Heart left ventricle (tissue), 16 donors: ENCODE measurements at regions of chr14 and their contacts with region 1.

Region 1: DNA sequence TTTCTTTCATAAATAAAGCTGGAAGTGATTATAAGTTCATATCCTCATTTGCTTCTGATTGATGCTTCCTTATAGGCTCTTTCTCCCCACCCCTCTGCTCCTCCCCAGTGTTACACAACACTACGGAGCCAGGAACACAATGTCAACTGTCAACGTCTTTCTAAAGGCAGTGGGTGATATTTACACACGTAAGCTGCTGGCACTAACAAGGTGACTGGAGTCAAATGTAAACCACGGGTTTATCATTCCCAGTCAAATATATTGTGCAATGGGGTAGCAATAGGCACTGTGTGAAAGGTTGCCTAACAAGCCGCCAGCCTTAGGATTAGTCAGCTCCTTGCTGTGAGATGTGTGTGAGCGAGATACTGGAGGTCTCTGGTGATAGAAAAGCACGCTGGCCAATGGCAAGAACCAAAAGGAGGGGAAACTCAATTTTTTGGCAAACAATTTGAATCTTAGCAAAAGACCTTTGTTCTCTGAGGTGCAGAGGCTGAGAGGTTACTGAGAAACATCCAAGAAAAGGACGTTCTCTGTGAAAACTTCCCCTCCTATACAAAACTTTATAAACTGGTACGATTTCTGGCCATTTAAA is 22.1 kb upstream of the HECTD1 start:
- DNase-seq: peak in 4 of 5 donors; percentile 19 to 87 (median 52)
- ATAC-seq: peak; percentile 96 to 100 (median 98)
- H3K4me3 ChIP-seq: peak overlapping the region in 8 of 12 donors; percentile 20 to 46 (median 31)
- H3K27ac ChIP-seq: peak overlapping the region in 11 of 12 donors; percentile 10 to 79 (median 57)
- H3K4me1 ChIP-seq: peaks cover 0 to 17% (median 3%) of the 10 kb centered on the region in 12 donors
- H3K27me3 ChIP-seq: no peaks in the 10 kb centered on the region
- CTCF ChIP-seq: no peak
- POLR2A ChIP-seq: no peak

Region 2: GRCh38 chr14:31059152-31059924 is 170.4 kb before region 1 on chr14:
- intact Hi-C with region 1: no loop called
- DNase-seq: peak in 3 of 5 donors; percentile 39 to 69 (median 65)
- ATAC-seq: peak in 3 of 4 donors; percentile 72 to 91 (median 87)
- H3K4me3 ChIP-seq: no peak overlapping the region
- H3K27ac ChIP-seq: no peak overlapping the region
- H3K4me1 ChIP-seq: peaks cover 0 to 13% (median 3%) of the 10 kb centered on the region in 12 donors
- H3K27me3 ChIP-seq: no peaks in the 10 kb centered on the region
- CTCF ChIP-seq: no peak
- POLR2A ChIP-seq: no peak

Region 3: DNA sequence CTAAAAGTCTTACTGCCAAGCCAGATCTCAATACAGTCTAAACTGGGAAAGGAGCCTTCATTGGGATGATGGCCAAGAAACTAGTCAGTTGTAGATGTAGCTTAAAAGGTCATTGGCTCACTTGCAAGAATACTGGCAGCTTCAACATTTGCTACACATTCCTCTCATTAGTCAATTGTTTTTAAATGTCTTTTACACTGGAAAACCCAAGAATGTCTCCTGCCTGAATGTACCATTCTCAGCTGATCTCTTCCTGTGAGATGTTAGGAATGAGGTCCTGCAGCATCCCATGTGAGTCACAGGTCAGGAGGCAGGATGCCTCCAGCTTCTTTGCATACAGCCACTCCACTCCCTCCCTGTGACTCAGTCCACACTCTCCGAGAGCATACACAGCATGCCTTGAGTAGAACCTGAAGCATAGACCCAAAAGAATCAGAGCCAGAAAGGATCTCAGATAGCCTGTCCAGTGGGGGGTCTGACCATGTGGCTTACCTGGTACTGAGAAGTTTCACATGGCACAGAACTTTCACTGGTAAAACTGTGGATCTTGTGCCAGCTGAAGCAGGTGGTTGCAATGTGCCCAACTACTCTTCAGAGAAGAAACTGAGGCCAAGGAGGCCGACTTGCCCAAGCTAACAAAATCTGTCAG is 33.9 kb after region 1 on chr14:
- intact Hi-C with region 1: loop called in 1 of 10 experiments (anchors 1 kb)
- DNase-seq: peak in 2 of 5 donors; percentile 29 to 52
- ATAC-seq: peak; percentile 72 to 88 (median 80)
- H3K4me3 ChIP-seq: no peak overlapping the region
- H3K27ac ChIP-seq: peak overlapping the region in 5 of 12 donors; percentile 30 to 70 (median 47)
- H3K4me1 ChIP-seq: peaks cover 0 to 27% (median 14%) of the 10 kb centered on the region in 12 donors
- H3K27me3 ChIP-seq: no peaks in the 10 kb centered on the region
- CTCF ChIP-seq: no peak
- POLR2A ChIP-seq: no peak

Region 4: DNA sequence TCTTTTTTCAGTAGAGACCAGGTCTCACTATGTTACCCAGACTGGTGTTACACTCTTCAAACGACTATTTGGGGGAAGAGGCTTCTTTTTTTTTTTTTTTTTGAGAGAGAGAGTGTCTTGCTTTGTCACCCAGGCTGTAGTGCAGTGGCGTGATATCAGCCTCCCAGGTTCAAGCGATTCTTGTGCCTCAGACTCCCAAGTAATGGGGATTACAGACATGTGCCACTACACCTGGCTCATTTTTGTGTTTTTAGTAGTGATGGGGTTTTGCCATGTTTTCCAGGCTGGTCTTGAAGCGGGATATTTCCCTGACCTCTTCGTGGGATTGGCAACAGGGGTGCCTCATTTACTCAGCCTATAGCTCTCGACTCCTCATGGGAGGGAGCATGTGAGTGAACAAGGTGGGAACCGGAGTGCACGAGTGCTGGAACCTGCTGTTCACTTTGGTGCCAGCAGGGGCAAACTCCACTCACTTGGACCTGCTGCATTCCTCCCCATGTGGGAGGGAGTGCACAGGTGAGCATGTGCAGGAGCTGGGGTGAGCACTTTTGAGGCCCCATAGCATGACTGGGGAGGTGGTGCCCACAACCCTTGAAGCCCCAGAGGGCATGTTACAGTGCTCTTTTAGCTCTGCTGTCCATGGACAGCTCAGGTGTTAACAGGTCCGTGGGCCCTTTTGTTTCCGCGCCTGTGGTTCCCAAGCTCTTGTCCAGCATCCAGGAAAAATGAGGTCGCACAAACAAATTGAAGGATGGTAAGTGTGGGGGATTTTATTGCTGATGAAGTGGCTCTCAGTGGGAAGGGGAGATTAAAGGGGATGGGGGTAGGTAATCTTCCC is 56.9 kb after region 1 on chr14:
- intact Hi-C with region 1: loop called in 2 of 10 experiments (anchors 10 kb)
- DNase-seq: no peak
- ATAC-seq: peak in 2 of 4 donors; percentile 34 to 41
- H3K4me3 ChIP-seq: no peak overlapping the region
- H3K27ac ChIP-seq: no peak overlapping the region
- H3K4me1 ChIP-seq: peaks cover 0 to 20% (median 0%) of the 10 kb centered on the region in 12 donors
- H3K27me3 ChIP-seq: no peaks in the 10 kb centered on the region
- CTCF ChIP-seq: peak in 4 of 12 donors; percentile 12 to 39 (median 20)
- POLR2A ChIP-seq: no peak

Region 5: DNA sequence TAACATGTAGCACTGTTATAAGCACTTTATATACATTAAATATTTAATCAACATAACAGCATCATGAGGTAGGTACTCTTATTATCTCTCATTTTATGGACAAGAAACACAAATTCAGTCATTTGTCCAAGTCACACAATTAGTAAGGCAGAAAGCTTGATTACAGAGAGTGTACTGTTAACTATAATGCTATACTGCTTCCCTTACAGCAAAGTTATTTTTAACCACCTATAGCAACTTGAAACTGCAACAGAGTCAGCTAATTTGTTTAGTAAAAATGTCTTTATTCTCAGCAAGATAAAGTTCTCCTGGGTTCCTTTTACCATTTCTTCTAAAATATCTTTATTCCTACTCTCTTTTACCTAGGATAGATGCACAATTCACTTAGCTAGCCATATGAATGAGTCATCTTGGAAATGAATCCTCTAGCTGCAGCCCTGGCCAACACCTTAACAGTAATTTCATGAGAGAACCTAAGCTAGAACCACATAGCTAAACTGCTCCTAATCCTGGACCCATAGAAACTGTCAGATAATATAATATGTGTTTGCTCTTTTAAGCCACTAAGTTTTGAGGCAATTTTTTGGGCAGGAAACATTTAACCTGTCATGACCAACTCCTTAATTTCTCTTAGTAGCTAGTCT is 68.1 kb after region 1 on chr14:
- intact Hi-C with region 1: loop called in 1 of 10 experiments (anchors 10 kb)
- DNase-seq: no peak
- ATAC-seq: no peak
- H3K4me3 ChIP-seq: no peak overlapping the region
- H3K27ac ChIP-seq: no peak overlapping the region
- H3K4me1 ChIP-seq: no peaks in the 10 kb centered on the region
- H3K27me3 ChIP-seq: no peaks in the 10 kb centered on the region
- CTCF ChIP-seq: no peak
- POLR2A ChIP-seq: no peak